ENCODE measurements at regions of chr2 and their contacts with region 1.

Region 1: DNA sequence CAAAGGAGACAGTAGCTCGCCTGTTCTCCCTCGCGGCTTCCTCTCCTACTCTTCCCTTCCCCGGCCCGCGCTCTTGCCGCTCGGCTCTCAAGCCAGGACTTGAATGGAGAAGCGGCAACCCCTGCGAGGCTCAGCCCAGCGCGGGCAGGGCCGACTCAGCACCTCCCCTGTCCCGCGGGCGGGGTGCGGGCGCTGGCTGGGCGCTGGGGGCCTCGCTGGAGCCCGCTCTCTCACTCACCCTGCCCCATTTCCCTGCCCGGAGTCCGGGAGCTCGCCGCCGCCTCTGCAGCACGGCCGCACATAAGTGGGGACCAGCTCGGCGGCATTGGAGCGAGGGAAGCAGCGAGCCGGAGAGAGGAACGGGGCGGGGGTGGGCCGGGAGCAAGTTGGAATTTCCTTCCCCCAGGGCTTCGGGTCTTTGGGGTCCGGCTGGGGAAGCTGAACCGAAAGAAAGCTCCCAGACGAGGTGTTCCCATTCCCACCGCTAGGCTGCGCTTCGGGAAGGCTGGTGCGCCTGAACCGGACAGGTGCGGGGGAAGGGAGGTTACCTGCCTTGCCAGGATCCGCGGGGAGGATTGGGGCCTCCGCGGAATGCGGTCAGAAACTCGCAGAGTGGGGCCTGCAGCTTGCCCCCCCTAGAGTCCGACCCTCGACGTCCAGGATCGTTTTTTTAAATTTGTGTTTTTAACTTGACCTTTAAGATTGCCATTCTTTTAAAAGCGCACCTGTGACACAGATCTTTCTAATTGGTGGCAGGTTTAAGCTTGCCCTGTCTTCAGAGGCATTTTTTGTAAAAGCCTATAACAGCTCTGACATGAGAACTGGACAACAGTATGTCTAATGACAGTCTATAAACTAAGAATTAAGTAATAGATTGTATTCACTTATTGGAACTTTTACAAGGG is at the start of gene COBLL1:
- DNase-seq: peak; percentile 78 to 84
- ATAC-seq: peak; percentile 74 to 91 (median 86)
- H3K4me3 ChIP-seq: peak within 1 kb of the TSS; percentile 62 to 96 (median 87)
- H3K27ac ChIP-seq: peak within 1 kb of the TSS; percentile 89 to 99 (median 97)
- H3K4me1 ChIP-seq: peaks cover 0 to 48% (median 27%) of the 10 kb centered on the region in 9 donors
- H3K27me3 ChIP-seq: peaks cover 0 to 19% (median 0%) of the 10 kb centered on the region in 7 donors
- CTCF ChIP-seq: peak; percentile 74 to 91 (median 84)
- total RNA-seq, gene COBLL1: 12.1 to 20.5 (median 15.1) TPM

Region 2: DNA sequence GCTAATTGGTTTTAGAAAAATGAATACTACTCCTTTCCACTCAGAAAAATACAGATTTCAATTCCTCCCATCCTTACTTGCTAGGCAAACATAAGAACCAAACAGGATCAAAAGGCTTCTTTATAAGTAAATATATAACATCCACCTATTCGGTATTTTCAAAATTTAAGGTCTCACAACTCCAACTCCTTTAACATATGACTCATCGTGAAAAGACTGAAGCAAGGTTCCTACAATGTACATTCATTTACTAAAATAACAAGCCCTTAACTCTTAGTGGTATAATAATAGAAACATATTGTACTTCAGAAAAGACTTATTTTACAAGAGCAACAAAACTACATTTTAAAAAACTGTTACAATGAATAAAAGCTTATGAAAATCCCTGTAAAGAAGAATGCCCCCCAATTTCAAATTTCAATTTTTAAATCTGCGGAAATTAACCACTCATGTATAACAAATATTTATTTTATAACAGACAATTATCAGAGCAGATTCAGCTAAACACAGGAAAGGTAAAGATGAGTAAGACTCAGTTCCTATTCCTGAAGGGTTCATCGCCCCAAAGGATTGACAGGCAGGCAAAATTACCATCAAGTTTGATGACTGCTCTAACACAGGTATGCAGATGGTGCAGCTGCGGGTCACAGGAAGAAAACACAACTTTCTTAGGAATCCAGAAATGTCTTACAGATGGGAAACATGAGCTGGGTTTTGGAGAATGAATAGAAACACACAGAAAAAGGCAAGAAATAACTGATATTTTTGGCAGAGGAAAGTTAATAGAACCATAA is 96.8 kb before region 1 on chr2:
- intact Hi-C with region 1: loop called in 4 of 10 experiments (anchors 1 to 5 kb)
- DNase-seq: no peak
- ATAC-seq: no peak
- H3K4me3 ChIP-seq: no peak overlapping the region
- H3K27ac ChIP-seq: no peak overlapping the region
- H3K4me1 ChIP-seq: peaks cover 0 to 60% (median 26%) of the 10 kb centered on the region in 9 donors
- H3K27me3 ChIP-seq: no peaks in the 10 kb centered on the region
- CTCF ChIP-seq: no peak

Region 3: GRCh38 chr2:164782323-164782722 is 59.6 kb before region 1 on chr2:
- intact Hi-C with region 1: loop called in 4 of 10 experiments (anchors 5 to 10 kb)
- DNase-seq: no peak
- ATAC-seq: peak in 6 of 8 donors; percentile 48 to 90 (median 70)
- H3K4me3 ChIP-seq: no peak overlapping the region
- H3K27ac ChIP-seq: peak overlapping the region in 9 of 10 donors; percentile 6 to 85 (median 63)
- H3K4me1 ChIP-seq: peaks cover 18 to 99% (median 67%) of the 10 kb centered on the region in 9 donors
- H3K27me3 ChIP-seq: no peaks in the 10 kb centered on the region
- CTCF ChIP-seq: no peak

Region 4: GRCh38 chr2:164910101-164910899 is 68.3 kb after region 1 on chr2:
- intact Hi-C with region 1: loop called (anchors 2 to 10 kb)
- DNase-seq: no peak
- ATAC-seq: peak in 6 of 8 donors; percentile 38 to 65 (median 46)
- H3K4me3 ChIP-seq: no peak overlapping the region
- H3K27ac ChIP-seq: peak overlapping the region in 5 of 10 donors; percentile 1 to 61 (median 28)
- H3K4me1 ChIP-seq: peaks cover 4 to 61% (median 30%) of the 10 kb centered on the region in 9 donors
- H3K27me3 ChIP-seq: no peaks in the 10 kb centered on the region
- CTCF ChIP-seq: no peak

Measured in heart right ventricle (tissue), 16 donors.